ENCODE measurements at regions of chr15 and their contacts with region 1.

Region 1: GRCh38 chr15:70799667-70800450 is 36.5 kb upstream of the UACA start:
- DNase-seq: peak in 1 of 2 donors; percentile 64
- ATAC-seq: peak; percentile 82
- H3K4me3 ChIP-seq: no peak overlapping the region
- H3K27ac ChIP-seq: peak overlapping the region in 1 of 2 donors; percentile 20
- H3K4me1 ChIP-seq: peaks cover 0 to 3% of the 10 kb centered on the region in 2 donors
- H3K27me3 ChIP-seq: no peaks in the 10 kb centered on the region

Region 2: GRCh38 chr15:70690491-70691257 is 109.2 kb before region 1 on chr15:
- intact Hi-C with region 1: no loop called
- DNase-seq: no peak
- ATAC-seq: no peak
- H3K4me3 ChIP-seq: no peak overlapping the region
- H3K27ac ChIP-seq: no peak overlapping the region
- H3K4me1 ChIP-seq: no peaks in the 10 kb centered on the region
- H3K27me3 ChIP-seq: no peaks in the 10 kb centered on the region

Region 3: GRCh38 chr15:70741107-70741531 is 58.7 kb before region 1 on chr15:
- intact Hi-C with region 1: loop called in 1 of 2 experiments (anchors 10 kb)
- DNase-seq: peak; percentile 71 to 77
- ATAC-seq: peak; percentile 78
- H3K4me3 ChIP-seq: no peak overlapping the region
- H3K27ac ChIP-seq: peak overlapping the region in 1 of 2 donors; percentile 42
- H3K4me1 ChIP-seq: peaks cover 3 to 8% of the 10 kb centered on the region in 2 donors
- H3K27me3 ChIP-seq: no peaks in the 10 kb centered on the region

Region 4: DNA sequence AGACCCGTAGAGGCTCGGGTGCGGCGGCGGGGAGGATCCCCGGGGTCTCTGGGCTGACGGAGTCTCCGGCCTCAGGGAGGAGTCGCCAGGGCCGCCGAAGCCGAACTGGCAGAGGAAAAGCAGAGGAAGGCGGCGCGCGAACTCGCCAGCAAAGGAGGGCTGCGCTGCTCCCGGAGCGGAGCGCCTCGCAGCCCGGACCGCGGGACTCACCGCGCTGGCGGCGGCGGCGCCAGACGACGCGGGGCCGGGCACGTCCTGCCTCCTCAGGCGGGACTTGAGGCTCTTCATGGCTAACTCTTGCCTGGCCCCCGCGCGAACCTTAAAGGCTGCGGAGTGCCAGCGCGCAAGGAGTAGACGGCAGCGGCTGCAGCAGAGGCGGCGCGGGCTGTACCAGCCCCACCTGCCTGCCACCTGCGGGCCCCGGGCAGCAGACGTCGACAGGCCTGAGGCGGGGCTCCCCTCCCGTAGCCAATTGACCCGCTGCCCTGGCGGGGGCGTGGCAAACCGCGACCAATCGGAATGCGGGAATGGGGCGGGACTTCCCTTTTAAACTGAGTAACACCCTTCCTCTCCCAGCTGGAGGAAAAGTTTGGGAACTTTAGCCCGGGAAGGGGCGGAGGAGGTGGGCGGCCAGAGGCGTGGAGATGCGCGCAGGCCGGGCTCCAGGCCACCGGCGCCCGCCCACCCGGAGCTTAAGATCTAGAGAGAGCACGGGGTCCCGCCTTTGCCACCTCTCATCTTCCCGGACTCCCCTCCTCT is 36.6 kb before region 1 on chr15 and contains the start of gene UACA:
- intact Hi-C with region 1: loop called in 1 of 2 experiments (anchors 1 kb)
- DNase-seq: peak; percentile 97 to 98
- ATAC-seq: peak; percentile 98
- H3K4me3 ChIP-seq: peak within 1 kb of the TSS; percentile 72 to 90
- H3K27ac ChIP-seq: peak within 1 kb of the TSS; percentile 90 to 93
- H3K4me1 ChIP-seq: no peaks in the 10 kb centered on the region
- H3K27me3 ChIP-seq: no peaks in the 10 kb centered on the region
- total RNA-seq, gene UACA: 114 to 132 TPM

Measured in aorta (tissue), 5 donors.